ENCODE measurements at regions of chr9 and their contacts with region 1.

Region 1: DNA sequence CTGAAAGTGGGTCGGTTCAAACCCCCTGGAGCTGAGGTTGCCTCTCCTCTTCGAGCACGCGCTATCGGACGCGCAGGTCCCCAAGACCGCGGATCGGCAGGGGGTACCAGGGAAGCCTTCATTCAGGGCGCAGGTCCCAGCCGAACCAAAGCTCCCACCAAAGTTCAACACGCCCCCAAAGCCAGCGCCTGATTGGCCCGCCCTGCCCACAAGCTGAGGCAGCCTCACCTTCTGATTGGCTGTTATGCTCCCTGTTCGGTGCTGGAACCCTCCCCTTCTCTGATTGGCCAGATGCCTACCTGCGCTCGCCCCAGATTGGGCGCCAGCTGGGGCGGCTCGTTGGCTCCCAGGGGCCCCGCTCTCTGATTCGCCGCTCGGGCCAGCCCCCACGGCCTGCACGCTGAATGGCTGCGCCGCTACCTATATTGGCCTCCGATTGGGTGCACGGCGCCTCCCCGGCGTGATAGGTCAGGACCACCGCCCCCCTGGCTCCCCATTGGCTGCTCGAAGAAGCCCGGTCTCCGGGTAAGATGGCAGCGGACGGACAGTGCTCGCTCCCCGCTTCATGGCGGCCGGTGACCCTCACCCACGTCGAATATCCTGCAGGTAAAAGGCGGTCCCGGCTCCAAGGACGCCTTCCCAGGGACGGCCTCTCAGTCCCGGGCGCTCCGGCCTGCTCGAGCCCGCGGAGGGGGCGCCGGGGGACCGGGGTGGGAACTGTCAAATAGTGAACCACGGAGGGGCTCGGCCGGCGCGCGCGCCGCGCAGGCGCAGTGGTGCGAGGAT is at the start of gene DOLPP1:
- DNase-seq: peak; percentile 97 to 99 (median 98)
- ATAC-seq: peak; percentile 95
- H3K4me3 ChIP-seq: peak within 1 kb of the TSS; percentile 91
- H3K4me3 Mint-ChIP-seq: peak within 1 kb of the TSS; percentile 96
- H3K27ac ChIP-seq: peak within 1 kb of the TSS; percentile 57
- H3K27ac Mint-ChIP-seq: peak within 1 kb of the TSS; percentile 81
- H3K4me1 ChIP-seq: peaks cover 39% of the 10 kb centered on the region
- H3K4me1 Mint-ChIP-seq: peaks cover 29% of the 10 kb centered on the region
- H3K27me3 ChIP-seq: no peaks in the 10 kb centered on the region
- H3K27me3 Mint-ChIP-seq: no peaks in the 10 kb centered on the region
- CTCF ChIP-seq: no peak
- total RNA-seq, gene DOLPP1: 2.7 to 3.6 TPM

Region 2: DNA sequence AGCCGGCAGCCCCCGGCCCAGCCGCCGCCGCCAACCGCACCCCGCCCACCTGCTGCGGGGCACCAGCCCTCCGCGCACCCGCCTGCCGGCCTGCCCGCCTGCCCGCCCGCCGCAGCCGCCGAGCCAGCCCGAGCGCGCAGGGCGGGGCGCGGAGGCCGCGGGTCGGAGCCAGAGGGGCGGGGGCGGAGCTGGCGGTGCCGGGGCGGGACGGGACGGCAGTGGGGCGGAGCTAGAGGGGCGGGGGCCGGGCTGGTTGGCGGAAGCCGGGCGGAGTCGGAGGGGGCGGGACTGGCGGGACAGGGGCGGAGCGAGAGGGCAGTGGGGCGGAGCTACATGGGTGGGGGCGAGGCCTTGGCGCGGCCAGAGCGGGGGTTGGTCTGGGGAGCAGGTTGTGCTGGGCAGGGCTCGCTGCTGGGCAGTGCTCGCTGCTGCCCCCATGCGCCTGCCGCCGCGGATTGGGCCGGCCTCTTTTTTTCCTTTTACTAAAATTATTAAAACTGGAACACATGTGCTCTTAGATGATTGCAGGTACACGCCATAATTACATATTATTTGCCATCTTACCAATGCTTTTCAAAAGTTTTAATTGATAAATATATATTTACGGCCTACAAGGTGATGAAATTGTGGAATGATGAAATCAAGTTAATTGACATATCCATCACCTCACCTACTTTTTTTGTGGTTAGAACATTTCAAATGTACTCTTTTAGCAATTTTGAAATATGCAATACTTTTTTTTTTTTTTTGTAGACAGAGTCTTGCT is 52.4 kb before region 1 on chr9 and contains the start of gene SH3GLB2:
- CTCF ChIA-PET with region 1: no interaction called
- POLR2A ChIA-PET with region 1: interaction called, 17 read pairs
- intact Hi-C with region 1: loop called in 1 of 2 experiments (anchors 2 kb)
- DNase-seq: peak; percentile 88 to 98 (median 92)
- ATAC-seq: peak; percentile 84
- H3K4me3 ChIP-seq: peak within 1 kb of the TSS; percentile 78
- H3K4me3 Mint-ChIP-seq: peak within 1 kb of the TSS; percentile 87
- H3K27ac ChIP-seq: peak within 1 kb of the TSS; percentile 12 to 53
- H3K27ac Mint-ChIP-seq: peak within 1 kb of the TSS; percentile 81
- H3K4me1 ChIP-seq: peaks cover 34% of the 10 kb centered on the region
- H3K4me1 Mint-ChIP-seq: peaks cover 25% of the 10 kb centered on the region
- H3K27me3 ChIP-seq: no peaks in the 10 kb centered on the region
- H3K27me3 Mint-ChIP-seq: no peaks in the 10 kb centered on the region
- CTCF ChIP-seq: no peak
- total RNA-seq, gene SH3GLB2: 65.6 to 69.1 TPM

Region 3: GRCh38 chr9:129036241-129036922 is 44.4 kb before region 1 on chr9 and contains the start of gene MIGA2:
- CTCF ChIA-PET with region 1: no interaction called
- POLR2A ChIA-PET with region 1: interaction called, 10 read pairs
- intact Hi-C with region 1: loop called in 1 of 2 experiments (anchors 2 kb)
- DNase-seq: peak; percentile 79 to 98 (median 90)
- ATAC-seq: peak; percentile 92
- H3K4me3 ChIP-seq: peak within 1 kb of the TSS; percentile 84
- H3K4me3 Mint-ChIP-seq: peak within 1 kb of the TSS; percentile 89
- H3K27ac ChIP-seq: peak within 1 kb of the TSS; percentile 13 to 46
- H3K27ac Mint-ChIP-seq: peak within 1 kb of the TSS; percentile 52
- H3K4me1 ChIP-seq: peaks cover 34% of the 10 kb centered on the region
- H3K4me1 Mint-ChIP-seq: peaks cover 35% of the 10 kb centered on the region
- H3K27me3 ChIP-seq: no peaks in the 10 kb centered on the region
- H3K27me3 Mint-ChIP-seq: no peaks in the 10 kb centered on the region
- CTCF ChIP-seq: no peak
- total RNA-seq, gene MIGA2: 53.2 to 56.9 TPM

Region 4: GRCh38 chr9:129052592-129052991 is 28.2 kb before region 1 on chr9:
- CTCF ChIA-PET with region 1: no interaction called
- POLR2A ChIA-PET with region 1: no interaction called
- intact Hi-C with region 1: no loop called
- DNase-seq: no peak
- ATAC-seq: no peak
- H3K4me3 ChIP-seq: no peak overlapping the region
- H3K4me3 Mint-ChIP-seq: no peak overlapping the region
- H3K27ac ChIP-seq: no peak overlapping the region
- H3K27ac Mint-ChIP-seq: no peak overlapping the region
- H3K4me1 ChIP-seq: no peaks in the 10 kb centered on the region
- H3K4me1 Mint-ChIP-seq: no peaks in the 10 kb centered on the region
- H3K27me3 ChIP-seq: no peaks in the 10 kb centered on the region
- H3K27me3 Mint-ChIP-seq: no peaks in the 10 kb centered on the region
- CTCF ChIP-seq: no peak

Region 5: DNA sequence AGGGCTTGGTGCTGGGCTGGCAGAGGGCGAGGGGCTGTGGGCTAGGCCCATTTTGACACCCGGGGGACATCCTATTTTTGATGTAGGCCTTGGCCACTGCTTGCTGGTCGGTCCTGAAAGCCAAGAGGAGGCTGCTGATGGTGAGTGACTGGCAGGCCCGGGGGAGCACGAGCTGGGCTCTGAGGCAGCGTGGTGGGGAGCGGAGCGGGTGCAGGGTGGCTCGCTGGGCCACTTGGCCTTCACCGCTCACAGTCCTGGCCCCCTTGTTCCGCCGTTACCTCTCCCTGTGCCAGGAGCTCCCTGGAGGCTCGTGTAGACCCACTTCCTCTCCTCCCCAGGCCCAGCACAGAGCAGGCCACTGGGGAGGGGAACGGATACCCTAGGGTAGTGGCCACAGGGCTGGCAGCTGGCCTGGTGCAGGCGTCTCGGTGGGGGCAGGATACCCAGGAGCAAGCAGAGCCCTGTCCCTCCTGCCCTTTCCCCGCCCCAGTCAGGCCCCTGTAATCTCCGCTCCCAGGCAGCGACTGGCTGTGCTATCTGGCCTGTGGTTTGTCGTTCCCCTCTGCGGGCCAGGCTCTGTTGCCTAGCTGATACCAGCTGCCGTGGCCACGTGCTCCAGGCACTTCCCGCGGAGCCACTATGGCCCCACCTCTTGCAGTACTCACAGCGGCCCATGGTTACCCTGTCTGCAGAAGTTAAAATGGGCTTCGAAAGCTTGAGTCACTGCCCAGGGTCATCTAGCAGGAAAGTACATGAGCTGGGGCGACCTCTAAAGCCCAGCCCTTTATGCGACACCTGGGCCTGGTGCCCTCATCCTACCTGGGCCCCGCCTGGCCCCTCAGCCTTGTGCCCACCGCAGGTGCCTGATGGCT is 11.6 kb before region 1 on chr9:
- CTCF ChIA-PET with region 1: no interaction called
- POLR2A ChIA-PET with region 1: interaction called, 25 read pairs
- intact Hi-C with region 1: no loop called
- DNase-seq: peak; percentile 21 to 84 (median 53)
- ATAC-seq: peak; percentile 90
- H3K4me3 ChIP-seq: no peak overlapping the region
- H3K4me3 Mint-ChIP-seq: peak overlapping the region; percentile 74
- H3K27ac ChIP-seq: peak overlapping the region; percentile 9 to 52
- H3K27ac Mint-ChIP-seq: peak overlapping the region; percentile 88
- H3K4me1 ChIP-seq: peaks cover 63% of the 10 kb centered on the region
- H3K4me1 Mint-ChIP-seq: peaks cover 35% of the 10 kb centered on the region
- H3K27me3 ChIP-seq: no peaks in the 10 kb centered on the region
- H3K27me3 Mint-ChIP-seq: no peaks in the 10 kb centered on the region
- CTCF ChIP-seq: no peak

Region 6: DNA sequence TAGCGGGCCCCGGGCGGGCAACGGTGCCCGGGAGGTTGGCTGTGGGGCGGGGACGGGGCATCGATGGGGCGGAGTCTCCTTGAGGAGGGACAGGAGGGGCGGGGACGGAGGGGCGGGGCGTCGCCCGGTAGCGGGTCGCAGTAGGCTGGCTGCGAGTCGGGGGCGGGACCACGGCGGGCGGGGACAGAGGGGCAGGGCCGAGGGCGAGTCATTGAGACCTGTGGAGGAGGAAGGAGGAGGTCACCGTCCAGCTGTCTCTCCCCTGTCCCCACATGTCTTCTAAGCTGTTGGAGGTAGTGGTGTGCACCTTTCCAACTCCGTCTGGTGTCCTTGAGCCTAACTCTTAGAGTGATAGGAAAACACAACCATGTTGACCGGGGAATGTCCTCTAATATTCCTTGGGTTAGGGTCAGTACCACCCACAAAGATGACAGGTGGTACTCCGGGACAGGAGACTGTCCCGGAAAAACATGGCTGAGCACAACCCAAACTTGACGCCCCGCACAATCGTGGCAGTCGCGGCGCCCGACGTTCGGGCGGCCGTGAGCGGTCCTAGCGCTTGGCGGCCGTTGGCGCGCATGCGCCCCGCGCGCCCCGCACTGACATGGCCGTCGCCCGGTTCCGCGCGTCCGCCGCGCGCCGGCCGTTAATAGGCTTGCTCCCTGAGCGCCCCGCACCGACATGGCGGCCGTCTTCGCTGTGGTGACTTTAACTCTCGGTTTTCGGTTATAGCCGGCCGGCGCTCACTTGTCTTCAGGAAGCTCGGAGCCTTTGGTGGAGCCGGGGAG is 30.1 kb after region 1 on chr9 and contains the starts of genes CRAT and PTPA:
- CTCF ChIA-PET with region 1: no interaction called
- POLR2A ChIA-PET with region 1: interaction called, 15 read pairs
- intact Hi-C with region 1: loop called (anchors 2 kb)
- DNase-seq: peak; percentile 93 to 99 (median 96)
- ATAC-seq: peak; percentile 85
- H3K4me3 ChIP-seq: peak within 1 kb of the TSS; percentile 93
- H3K4me3 Mint-ChIP-seq: peak within 1 kb of the TSS; percentile 98
- H3K27ac ChIP-seq: peak within 1 kb of the TSS; percentile 70 to 92
- H3K27ac Mint-ChIP-seq: peak within 1 kb of the TSS; percentile 92
- H3K4me1 ChIP-seq: peaks cover 34% of the 10 kb centered on the region
- H3K4me1 Mint-ChIP-seq: peaks cover 36% of the 10 kb centered on the region
- H3K27me3 ChIP-seq: no peaks in the 10 kb centered on the region
- H3K27me3 Mint-ChIP-seq: no peaks in the 10 kb centered on the region
- CTCF ChIP-seq: no peak
- total RNA-seq, gene CRAT: 7.1 to 9.4 TPM
- total RNA-seq, gene PTPA: 21.6 to 23.3 TPM